ENCODE measurements at regions of chr15 and their contacts with region 1.

Region 1: DNA sequence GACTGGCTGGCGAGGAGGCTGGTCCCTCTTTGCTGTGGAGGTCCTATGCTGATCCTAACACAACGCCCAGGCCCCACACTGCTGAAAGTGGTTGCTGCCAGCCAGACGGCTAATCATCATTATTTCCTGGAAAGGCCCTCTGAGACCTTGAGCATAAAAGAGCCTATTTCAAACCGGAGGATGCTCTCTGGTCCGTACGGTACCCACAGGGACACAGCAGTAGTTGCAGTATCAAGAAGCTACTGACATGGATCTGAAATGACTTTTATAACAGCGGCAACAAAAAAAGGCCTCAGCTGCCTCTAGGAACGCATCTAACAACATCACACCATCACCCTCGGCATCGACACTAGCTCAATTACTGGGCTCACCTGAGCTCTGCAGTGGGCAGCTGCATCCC is 59.1 kb upstream of the FOXB1 start:
- DNase-seq: no peak
- H3K4me3 ChIP-seq: no peak overlapping the region
- H3K27ac ChIP-seq: no peak overlapping the region
- H3K4me1 ChIP-seq: no peaks in the 10 kb centered on the region
- H3K27me3 ChIP-seq: no peaks in the 10 kb centered on the region
- CTCF ChIP-seq: no peak
- POLR2A ChIP-seq: no peak

Region 2: DNA sequence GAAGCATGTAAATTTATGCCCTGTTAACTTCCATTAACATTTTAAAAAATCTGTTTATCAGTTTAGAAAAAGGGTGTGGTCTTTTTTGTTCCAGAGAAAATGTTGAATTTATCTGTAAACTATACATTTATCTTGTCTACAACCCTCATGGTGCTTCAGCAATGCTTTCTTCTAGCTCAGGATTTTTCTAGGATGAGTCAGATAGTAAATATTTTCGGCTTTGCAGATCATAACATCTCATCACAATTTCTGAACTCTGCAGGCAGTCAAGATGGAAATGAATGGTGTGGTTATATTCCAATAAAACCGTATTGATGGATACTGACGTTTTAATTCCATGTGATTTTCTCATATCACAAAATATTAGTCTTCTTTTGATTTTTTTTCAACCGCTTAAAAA is 11.4 kb before region 1 on chr15:
- intact Hi-C with region 1: loop called (anchors 1 kb)
- DNase-seq: no peak
- H3K4me3 ChIP-seq: no peak overlapping the region
- H3K27ac ChIP-seq: no peak overlapping the region
- H3K4me1 ChIP-seq: no peaks in the 10 kb centered on the region
- H3K27me3 ChIP-seq: peaks cover 0 to 40% of the 10 kb centered on the region in 2 donors
- CTCF ChIP-seq: no peak
- POLR2A ChIP-seq: no peak

Region 3: DNA sequence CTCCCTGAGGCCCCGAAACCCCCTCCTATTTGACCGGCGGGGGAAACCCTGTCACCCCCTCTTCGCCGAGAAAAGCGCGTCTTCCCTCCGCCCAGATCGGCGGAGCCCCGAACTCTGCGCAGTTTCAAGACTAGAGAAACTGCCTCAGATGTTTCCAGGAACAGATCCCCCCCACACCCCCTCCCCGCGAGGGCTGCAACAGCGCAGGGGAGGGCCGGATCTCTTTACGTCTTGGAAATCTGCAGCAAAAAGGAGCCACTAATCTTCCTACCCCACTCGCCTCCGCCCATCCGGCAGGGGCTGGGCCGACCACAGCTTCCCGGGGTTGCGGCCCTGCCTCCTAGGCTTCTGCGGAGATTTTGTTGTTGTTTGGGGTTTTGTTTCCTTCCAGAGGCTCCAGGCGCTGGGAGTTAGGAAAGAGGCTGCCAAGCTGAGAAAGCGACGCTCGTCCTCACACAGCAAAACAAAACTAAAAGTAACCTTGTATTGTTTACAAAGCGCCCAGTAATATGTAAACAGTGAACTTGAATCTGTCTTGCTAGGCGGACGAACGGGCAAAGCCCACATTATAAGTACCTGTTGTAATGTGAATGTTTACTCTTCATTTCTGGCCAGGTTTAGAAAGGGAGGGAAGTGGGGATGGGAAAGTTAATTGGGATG is 61.3 kb after region 1 on chr15:
- intact Hi-C with region 1: no loop called
- DNase-seq: no peak
- H3K4me3 ChIP-seq: peak overlapping the region; percentile 40 to 66 (median 42)
- H3K27ac ChIP-seq: no peak overlapping the region
- H3K4me1 ChIP-seq: peaks cover 0 to 14% of the 10 kb centered on the region in 2 donors
- H3K27me3 ChIP-seq: peaks cover 12 to 99% of the 10 kb centered on the region in 2 donors
- CTCF ChIP-seq: no peak
- POLR2A ChIP-seq: no peak